MCF 10A (cell line): ENCODE measurements at regions of chr7 and their contacts with region 1.

Region 1: DNA sequence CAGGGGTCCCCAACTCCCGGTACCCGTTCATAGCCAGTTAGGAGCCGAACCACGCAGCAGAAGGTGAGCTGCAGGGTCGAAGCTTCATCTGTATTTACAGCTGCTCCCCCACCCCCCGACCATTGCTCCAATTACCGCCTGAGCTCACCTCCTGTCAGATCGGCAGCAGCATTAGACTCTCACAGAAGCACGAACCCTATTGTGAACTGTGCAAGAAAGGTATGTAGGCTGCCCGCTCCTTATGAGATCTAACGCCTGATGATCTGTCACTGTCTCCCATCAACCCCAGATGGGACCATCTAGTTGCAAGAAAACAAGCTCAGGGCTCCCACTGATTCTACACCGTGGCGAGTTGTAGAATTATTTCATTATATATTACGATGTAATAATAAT is 14.6 kb upstream of the AZGP1 start:
- DNase-seq: no peak
- H3K4me3 Mint-ChIP-seq: no peak overlapping the region
- H3K27ac Mint-ChIP-seq: no peak overlapping the region
- H3K4me1 Mint-ChIP-seq: no peaks in the 10 kb centered on the region
- H3K27me3 Mint-ChIP-seq: no peaks in the 10 kb centered on the region
- CTCF ChIP-seq: no peak

Region 2: GRCh38 chr7:99631295-99632109 is 359.0 kb before region 1 on chr7:
- CTCF ChIA-PET with region 1: interaction called, 9 read pairs
- POLR2A ChIA-PET with region 1: interaction called, 4 read pairs
- intact Hi-C with region 1: loop called (anchors 1 kb)
- DNase-seq: peak; percentile 61
- H3K4me3 Mint-ChIP-seq: no peak overlapping the region
- H3K27ac Mint-ChIP-seq: peak overlapping the region; percentile 84
- H3K4me1 Mint-ChIP-seq: peaks cover 21% of the 10 kb centered on the region
- H3K27me3 Mint-ChIP-seq: no peaks in the 10 kb centered on the region
- CTCF ChIP-seq: peak; percentile 64

Region 3: DNA sequence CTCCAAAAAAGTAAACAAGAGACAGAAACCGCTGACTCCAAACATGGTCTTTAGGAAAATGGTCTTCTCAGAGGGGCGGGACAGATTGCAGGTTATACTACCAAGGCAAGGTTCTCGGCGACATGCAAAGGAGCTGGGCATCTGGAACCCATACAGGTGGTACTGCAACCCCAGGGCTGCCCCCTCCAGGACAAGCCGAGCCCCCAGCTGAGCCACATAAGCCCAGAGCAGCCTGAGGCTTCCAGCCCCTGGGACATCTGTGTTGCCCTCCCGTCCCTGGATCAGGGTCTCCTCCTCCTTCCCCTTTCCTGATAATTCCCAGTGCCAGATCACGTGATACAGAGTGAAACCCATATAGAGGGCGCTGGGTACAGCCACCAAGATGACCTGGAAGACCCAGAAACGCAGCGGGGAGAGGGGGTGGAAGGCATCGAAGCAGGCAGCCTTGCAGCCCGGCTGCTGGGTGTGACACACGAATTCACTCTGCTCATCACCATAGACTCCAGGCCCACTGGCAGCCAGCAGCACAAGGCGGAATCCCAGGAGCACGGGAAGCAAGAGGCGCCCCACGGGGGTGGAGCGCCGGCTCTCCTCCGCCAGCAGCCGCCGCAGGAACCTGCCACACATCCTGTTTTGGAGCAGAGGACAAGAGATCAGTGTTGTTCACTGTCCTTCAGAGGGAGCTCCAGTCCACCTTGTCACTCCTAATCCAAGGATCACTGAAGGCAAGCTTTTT is 61.3 kb before region 1 on chr7 and contains the start of gene GJC3:
- CTCF ChIA-PET with region 1: interaction called, 16 read pairs
- POLR2A ChIA-PET with region 1: interaction called, 3 read pairs
- intact Hi-C with region 1: no loop called
- DNase-seq: peak; percentile 50
- H3K4me3 Mint-ChIP-seq: peak within 1 kb of the TSS; percentile 22
- H3K27ac Mint-ChIP-seq: no peak within 1 kb of the TSS
- H3K4me1 Mint-ChIP-seq: peaks cover 8% of the 10 kb centered on the region
- H3K27me3 Mint-ChIP-seq: peaks cover 77% of the 10 kb centered on the region
- CTCF ChIP-seq: peak; percentile 24
- total RNA-seq, gene GJC3: not detected in 2 replicates

Region 4: GRCh38 chr7:100003711-100004661 is 13.5 kb after region 1 on chr7:
- CTCF ChIA-PET with region 1: interaction called, 15 read pairs
- POLR2A ChIA-PET with region 1: interaction called, 4 read pairs
- intact Hi-C with region 1: no loop called
- DNase-seq: no peak
- H3K4me3 Mint-ChIP-seq: no peak overlapping the region
- H3K27ac Mint-ChIP-seq: no peak overlapping the region
- H3K4me1 Mint-ChIP-seq: no peaks in the 10 kb centered on the region
- H3K27me3 Mint-ChIP-seq: no peaks in the 10 kb centered on the region
- CTCF ChIP-seq: no peak

Region 5: GRCh38 chr7:100029596-100029995 is 39.1 kb after region 1 on chr7:
- CTCF ChIA-PET with region 1: no interaction called
- POLR2A ChIA-PET with region 1: no interaction called
- intact Hi-C with region 1: no loop called
- DNase-seq: no peak
- H3K4me3 Mint-ChIP-seq: no peak overlapping the region
- H3K27ac Mint-ChIP-seq: peak overlapping the region; percentile 29
- H3K4me1 Mint-ChIP-seq: peaks cover 6% of the 10 kb centered on the region
- H3K27me3 Mint-ChIP-seq: no peaks in the 10 kb centered on the region
- CTCF ChIP-seq: no peak

Region 6: DNA sequence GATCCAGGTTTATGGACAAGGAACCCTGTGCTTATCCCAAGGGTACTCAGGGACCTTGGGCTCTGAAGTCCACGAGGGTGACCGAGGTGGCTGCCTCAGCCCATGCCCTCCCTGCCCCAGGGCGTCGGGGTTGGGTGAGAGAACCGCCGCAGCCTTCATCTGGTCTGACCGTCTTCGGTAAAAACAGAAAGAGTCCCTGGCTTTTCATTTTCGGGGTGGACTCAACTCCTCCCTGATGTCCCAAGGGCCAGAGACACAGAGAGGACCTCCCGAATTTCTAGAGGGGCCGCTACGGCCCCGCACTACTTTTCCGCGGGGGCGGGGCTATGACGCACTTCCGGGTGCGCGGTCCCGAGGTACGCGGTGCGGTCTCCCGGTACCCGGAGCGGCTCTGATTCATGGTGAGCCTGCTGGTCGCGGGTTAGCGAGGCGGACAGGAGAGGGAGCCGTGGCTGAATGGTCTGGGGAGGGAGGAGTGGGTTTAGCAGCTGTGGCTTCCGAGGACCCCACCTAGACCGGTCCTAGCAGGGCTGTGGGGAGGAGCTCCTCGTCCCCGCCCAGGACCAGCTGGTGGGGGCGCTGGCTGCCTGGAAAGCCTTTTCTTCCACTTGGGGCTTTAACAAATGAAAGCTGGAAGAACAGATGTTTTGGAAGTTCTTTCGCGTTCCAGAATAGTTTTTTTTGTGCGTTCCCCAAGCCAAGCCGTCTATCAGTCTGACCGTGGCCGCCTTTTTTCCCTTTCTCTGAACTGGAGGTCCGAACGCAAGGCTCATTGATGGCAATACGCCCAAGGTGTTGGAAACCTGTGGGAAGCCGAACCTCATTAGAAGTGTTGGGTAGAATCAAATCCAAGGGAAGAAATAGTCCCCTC is 59.2 kb after region 1 on chr7 and contains the start of gene ZSCAN21:
- CTCF ChIA-PET with region 1: interaction called, 39 read pairs
- POLR2A ChIA-PET with region 1: interaction called, 11 read pairs
- intact Hi-C with region 1: loop called (anchors 1 kb)
- DNase-seq: peak; percentile 73
- H3K4me3 Mint-ChIP-seq: peak within 1 kb of the TSS; percentile 82
- H3K27ac Mint-ChIP-seq: peak within 1 kb of the TSS; percentile 91
- H3K4me1 Mint-ChIP-seq: peaks cover 10% of the 10 kb centered on the region
- H3K27me3 Mint-ChIP-seq: no peaks in the 10 kb centered on the region
- CTCF ChIP-seq: peak; percentile 12
- total RNA-seq, gene ZSCAN21: 13.8 and 14.7 TPM in 2 replicates

Region 7: DNA sequence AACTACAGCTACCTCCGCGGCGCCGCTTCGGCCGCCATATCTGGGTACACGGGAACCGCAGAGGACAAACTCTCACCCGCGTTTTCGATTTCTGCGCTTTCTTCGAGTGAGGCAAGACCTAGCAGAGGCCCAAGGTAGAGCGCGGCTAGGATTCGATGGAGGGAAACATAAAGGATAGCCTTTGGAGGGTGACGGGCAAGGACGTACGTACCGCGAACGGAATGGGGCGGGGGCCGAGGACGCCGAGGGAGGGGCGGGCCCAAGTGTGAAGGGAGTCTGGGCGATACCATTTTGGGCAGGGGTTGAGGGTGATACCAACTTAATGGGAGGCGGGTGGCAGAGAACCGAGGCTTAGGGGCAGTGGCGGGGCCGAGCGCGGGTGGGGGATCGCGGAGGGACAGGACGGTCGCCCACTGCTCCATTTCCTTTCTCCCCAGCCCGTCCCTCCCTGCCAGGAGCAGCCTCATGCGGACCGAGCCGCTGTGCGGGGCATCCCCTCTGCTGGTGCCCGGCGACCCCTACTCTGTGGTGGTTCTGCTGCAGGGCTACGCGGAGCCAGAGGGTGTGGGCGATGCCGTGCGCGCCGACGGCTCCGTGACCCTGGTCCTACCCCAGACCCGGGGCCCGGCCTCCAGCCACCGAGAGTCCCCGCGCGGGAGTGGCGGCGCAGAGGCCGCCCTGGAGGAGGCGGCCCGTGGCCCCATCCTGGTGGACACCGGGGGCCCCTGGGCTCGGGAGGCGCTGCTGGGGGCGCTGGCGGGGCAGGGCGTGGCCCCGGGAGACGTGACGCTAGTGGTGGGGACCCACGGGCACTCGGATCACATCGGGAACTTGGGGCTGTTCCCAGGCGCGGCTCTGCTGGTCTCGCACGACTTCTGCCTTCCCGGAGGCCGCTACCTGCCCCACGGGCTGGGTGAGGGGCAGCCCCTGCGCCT is 136.7 kb after region 1 on chr7 and contains the start of gene MBLAC1:
- CTCF ChIA-PET with region 1: interaction called, 10 read pairs
- POLR2A ChIA-PET with region 1: no interaction called
- intact Hi-C with region 1: loop called (anchors 5 kb)
- DNase-seq: peak; percentile 89
- H3K4me3 Mint-ChIP-seq: peak within 1 kb of the TSS; percentile 98
- H3K27ac Mint-ChIP-seq: peak within 1 kb of the TSS; percentile 99
- H3K4me1 Mint-ChIP-seq: peaks cover 11% of the 10 kb centered on the region
- H3K27me3 Mint-ChIP-seq: no peaks in the 10 kb centered on the region
- CTCF ChIP-seq: no peak
- total RNA-seq, gene MBLAC1: 2.5 and 3.2 TPM in 2 replicates

Region 8: GRCh38 chr7:100736671-100737070 is 746.2 kb after region 1 on chr7:
- CTCF ChIA-PET with region 1: no interaction called
- POLR2A ChIA-PET with region 1: no interaction called
- intact Hi-C with region 1: no loop called
- DNase-seq: no peak
- H3K4me3 Mint-ChIP-seq: no peak overlapping the region
- H3K27ac Mint-ChIP-seq: no peak overlapping the region
- H3K4me1 Mint-ChIP-seq: peaks cover 5% of the 10 kb centered on the region
- H3K27me3 Mint-ChIP-seq: no peaks in the 10 kb centered on the region
- CTCF ChIP-seq: no peak